Calu3 (cell line): ENCODE measurements at regions of chr5 and their contacts with region 1.

Region 1: GRCh38 chr5:134527146-134527960 is 1.9 kb downstream of the JADE2 start:
- DNase-seq: peak; percentile 85
- H3K4me3 Mint-ChIP-seq: peak overlapping the region; percentile 92
- H3K27ac Mint-ChIP-seq: peak overlapping the region; percentile 97
- H3K4me1 Mint-ChIP-seq: peaks cover 48% of the 10 kb centered on the region
- H3K27me3 Mint-ChIP-seq: no peaks in the 10 kb centered on the region
- CTCF ChIP-seq: peak; percentile 89

Region 2: GRCh38 chr5:134436523-134437339 is 90.6 kb before region 1 on chr5:
- CTCF ChIA-PET with region 1: interaction called, 6 read pairs
- intact Hi-C with region 1: loop called (anchors 5 kb)
- DNase-seq: peak; percentile 91
- H3K4me3 Mint-ChIP-seq: peak overlapping the region; percentile 29
- H3K27ac Mint-ChIP-seq: peak overlapping the region; percentile 80
- H3K4me1 Mint-ChIP-seq: peaks cover 62% of the 10 kb centered on the region
- H3K27me3 Mint-ChIP-seq: no peaks in the 10 kb centered on the region
- CTCF ChIP-seq: no peak

Region 3: DNA sequence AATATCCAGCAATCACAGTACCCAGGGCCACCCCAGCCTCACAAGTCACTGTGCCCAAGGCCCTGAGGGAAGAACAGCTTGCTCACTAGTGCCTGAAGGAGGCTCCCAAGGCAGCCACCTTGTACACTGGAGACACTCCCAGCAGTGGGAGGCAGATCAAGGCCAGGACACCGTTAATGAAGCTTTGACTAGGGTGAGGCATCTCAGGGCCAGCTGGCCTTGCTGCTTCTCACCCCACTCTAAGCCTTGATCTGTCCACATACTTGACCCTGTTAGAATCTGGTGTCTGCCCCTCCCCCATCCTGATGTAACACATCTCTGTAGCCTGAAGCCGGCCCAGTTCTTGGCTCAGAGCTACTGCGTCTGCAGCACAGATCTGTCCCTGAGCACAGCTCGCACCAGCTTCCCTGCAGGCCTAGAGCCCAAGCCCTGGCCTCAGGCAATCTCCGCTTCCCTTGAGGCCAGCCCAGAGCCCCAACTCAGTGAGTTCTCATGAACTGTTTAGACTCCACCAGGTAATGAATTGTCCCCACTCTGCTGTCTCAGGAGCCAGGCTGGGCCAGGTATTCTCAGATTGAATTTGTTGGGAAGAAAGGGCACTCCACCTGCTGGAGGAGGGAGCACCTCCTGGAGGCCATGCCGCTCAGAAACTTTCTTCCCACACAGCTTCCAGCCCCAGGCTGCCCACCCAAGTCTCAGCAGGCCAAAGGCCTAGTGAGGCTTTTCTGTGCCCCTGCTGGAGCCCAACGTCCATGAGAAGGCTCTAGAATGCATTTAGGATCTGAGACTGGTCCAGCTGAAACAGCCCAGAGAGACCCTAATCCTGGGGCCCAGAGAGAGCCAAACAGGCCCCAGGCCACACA is 15.3 kb before region 1 on chr5:
- CTCF ChIA-PET with region 1: interaction called, 23 read pairs
- intact Hi-C with region 1: loop called (anchors 2 kb)
- DNase-seq: peak; percentile 64
- H3K4me3 Mint-ChIP-seq: peak overlapping the region; percentile 64
- H3K27ac Mint-ChIP-seq: peak overlapping the region; percentile 87
- H3K4me1 Mint-ChIP-seq: peaks cover 60% of the 10 kb centered on the region
- H3K27me3 Mint-ChIP-seq: no peaks in the 10 kb centered on the region
- CTCF ChIP-seq: peak; percentile 51

Region 4: DNA sequence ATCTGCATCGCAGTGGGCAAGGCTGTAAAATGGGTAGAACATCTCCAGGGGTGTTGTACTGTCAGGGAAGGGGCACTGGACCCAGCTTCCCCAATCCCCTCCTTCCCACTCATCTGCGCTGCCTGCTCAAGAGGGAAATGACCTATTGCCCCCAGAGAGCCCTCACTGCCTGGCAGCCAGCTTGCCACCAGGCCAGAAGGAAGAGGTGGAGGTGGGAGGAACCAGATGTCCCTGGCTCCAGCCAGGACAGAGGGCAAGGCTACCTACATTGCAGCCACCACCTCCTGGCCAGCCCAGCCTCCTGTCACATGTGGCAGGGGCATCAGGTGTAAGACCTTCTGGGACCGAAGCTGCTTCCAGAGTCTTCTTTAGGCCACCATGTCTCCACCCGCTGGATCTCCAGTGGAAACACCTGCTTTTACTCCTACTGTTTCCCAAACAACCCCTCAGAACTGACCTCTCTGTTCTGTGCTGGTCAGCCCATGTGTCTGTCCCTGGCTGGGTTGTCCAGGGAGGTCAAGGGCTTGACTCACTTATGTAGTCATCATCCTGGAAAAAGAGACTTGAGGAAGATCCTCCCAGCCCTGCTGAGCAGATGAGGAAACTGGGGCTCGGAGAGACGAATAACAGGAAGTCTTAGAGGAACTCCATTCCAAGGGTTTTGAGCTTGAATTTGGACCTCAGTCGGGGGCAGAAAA is 40.4 kb after region 1 on chr5:
- CTCF ChIA-PET with region 1: no interaction called
- intact Hi-C with region 1: no loop called
- DNase-seq: no peak
- H3K4me3 Mint-ChIP-seq: no peak overlapping the region
- H3K27ac Mint-ChIP-seq: peak overlapping the region; percentile 28
- H3K4me1 Mint-ChIP-seq: peaks cover 37% of the 10 kb centered on the region
- H3K27me3 Mint-ChIP-seq: no peaks in the 10 kb centered on the region
- CTCF ChIP-seq: no peak

Region 5: DNA sequence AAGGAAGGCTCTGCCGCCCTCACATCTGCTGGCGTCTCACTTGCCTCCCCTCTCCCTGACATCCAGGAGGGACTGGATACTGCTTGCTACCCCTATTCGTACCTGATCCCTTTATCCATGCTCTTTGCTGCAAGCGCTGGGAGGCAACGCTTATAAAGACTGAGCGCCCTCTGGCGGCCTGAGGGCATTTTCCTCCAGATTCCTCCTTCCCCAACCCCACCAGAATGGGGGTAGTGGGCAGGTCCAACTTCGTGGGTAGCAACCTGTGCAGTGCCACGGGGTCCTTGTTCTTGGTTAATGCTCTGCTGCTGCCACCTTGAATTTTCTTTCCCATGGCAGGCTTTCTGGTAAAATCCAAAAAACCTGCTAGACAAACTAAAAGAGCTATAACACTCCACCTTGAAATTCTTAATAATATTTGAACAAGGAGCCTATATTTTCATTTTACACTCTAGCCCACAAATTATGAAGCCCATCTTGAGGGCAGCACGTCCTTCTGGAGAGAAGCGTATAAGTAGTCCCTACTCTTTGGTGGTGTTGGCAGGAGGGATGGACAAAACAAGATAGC is 50.5 kb after region 1 on chr5:
- CTCF ChIA-PET with region 1: interaction called, 14 read pairs
- intact Hi-C with region 1: loop called (anchors 5 kb)
- DNase-seq: peak; percentile 88
- H3K4me3 Mint-ChIP-seq: no peak overlapping the region
- H3K27ac Mint-ChIP-seq: peak overlapping the region; percentile 77
- H3K4me1 Mint-ChIP-seq: peaks cover 19% of the 10 kb centered on the region
- H3K27me3 Mint-ChIP-seq: no peaks in the 10 kb centered on the region
- CTCF ChIP-seq: peak; percentile 90

Region 6: DNA sequence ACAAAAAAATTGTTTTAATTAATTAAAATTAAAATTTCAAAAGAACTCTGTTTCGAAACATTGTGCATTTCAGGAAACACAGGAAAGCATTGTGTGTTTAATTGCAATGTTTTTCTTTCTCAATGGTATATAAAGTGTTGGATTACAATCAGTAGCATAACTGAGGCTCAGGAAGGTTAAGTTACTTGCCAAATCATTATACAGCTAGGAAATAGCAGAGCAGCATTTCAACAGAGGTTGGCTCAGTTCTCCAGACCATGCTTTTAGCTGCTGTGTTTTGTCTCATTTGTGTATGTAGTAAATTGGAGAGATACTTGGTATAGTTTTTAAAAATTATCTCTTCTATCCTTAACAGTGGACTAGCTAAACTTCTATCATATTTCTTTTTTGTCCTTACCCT is 180.9 kb after region 1 on chr5:
- CTCF ChIA-PET with region 1: no interaction called
- intact Hi-C with region 1: no loop called
- DNase-seq: no peak
- H3K4me3 Mint-ChIP-seq: no peak overlapping the region
- H3K27ac Mint-ChIP-seq: no peak overlapping the region
- H3K4me1 Mint-ChIP-seq: no peaks in the 10 kb centered on the region
- H3K27me3 Mint-ChIP-seq: no peaks in the 10 kb centered on the region
- CTCF ChIP-seq: no peak